PC-3 (cell line): ENCODE measurements at regions of chr22 and their contacts with region 1.

Region 1: DNA sequence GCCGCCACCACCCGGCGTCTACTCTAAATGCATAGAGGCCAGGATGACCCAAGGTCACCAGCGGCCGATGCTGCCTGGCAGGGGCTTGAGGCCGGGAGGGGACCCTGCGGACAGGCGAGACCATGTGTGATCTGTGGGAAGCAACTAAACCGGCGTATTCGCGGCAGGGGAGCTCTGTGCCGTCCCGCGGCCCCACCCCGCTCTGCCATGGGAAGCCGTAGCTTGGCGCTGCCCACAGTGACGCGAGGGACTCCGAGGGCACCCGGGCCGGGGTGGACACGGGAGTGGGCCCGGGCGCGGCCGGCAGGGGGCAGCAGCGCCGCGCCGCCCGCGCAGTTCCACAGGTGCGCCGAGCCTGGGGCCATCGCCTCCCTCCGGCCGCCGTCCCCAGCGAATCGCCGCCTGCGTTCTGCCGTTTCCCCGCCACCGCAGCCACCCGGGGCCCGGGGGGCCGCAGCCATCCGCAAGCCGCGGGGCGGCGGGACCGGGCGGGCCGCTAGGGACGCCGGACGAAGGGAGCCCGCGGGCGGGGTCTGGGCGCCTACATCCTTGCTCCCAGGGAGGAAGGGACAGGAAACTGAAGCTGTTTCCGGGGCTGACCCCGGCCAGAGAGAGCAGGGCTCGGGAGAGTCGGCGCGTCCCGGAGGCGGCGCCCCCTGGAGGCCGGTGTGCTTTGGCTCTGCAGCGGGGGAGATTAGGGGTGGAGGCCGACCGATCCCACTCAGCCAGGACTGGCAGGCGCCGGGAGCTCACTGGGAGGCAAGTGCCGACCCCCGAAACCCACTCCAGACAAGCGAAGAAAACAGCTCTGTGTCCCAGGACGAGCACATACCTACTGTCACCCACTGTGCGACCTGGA is 12.5 kb upstream of the HDHD5 start:
- DNase-seq: peak; percentile 83
- ATAC-seq: peak; percentile 96
- H3K4me3 ChIP-seq: peak overlapping the region; percentile 76
- H3K27ac ChIP-seq: peak overlapping the region; percentile 49
- H3K4me1 ChIP-seq: no peaks in the 10 kb centered on the region
- H3K27me3 ChIP-seq: no peaks in the 10 kb centered on the region
- CTCF ChIP-seq: peak; percentile 71

Region 2: DNA sequence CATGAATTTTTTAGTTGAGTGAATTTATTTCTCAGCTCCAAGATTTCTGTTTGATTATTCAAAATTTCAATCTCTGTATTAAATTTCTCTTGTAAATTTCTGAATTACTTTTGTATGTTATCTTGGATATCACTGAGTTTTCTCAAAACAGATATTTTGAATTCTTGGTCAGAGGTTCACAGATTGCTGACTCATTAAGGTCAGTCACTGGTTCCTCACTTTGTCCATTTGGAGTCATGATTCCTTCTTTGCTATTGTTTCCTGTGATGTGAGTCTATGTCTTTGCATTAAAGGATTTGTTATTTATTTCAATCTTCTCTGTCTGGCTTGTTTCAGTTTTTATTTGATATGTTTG is 96.9 kb before region 1 on chr22:
- CTCF ChIA-PET with region 1: interaction called, 11 read pairs
- POLR2A ChIA-PET with region 1: no interaction called
- intact Hi-C with region 1: loop called (anchors 1 kb)
- DNase-seq: no peak
- ATAC-seq: no peak
- H3K4me3 ChIP-seq: no peak overlapping the region
- H3K27ac ChIP-seq: no peak overlapping the region
- H3K4me1 ChIP-seq: no peaks in the 10 kb centered on the region; the same call in 1 of the 2 replicates
- H3K27me3 ChIP-seq: 0 out of 2 replicates have a peak, but pooled peaks cover 6% of the 10 kb centered on the region
- CTCF ChIP-seq: no peak

Region 3: DNA sequence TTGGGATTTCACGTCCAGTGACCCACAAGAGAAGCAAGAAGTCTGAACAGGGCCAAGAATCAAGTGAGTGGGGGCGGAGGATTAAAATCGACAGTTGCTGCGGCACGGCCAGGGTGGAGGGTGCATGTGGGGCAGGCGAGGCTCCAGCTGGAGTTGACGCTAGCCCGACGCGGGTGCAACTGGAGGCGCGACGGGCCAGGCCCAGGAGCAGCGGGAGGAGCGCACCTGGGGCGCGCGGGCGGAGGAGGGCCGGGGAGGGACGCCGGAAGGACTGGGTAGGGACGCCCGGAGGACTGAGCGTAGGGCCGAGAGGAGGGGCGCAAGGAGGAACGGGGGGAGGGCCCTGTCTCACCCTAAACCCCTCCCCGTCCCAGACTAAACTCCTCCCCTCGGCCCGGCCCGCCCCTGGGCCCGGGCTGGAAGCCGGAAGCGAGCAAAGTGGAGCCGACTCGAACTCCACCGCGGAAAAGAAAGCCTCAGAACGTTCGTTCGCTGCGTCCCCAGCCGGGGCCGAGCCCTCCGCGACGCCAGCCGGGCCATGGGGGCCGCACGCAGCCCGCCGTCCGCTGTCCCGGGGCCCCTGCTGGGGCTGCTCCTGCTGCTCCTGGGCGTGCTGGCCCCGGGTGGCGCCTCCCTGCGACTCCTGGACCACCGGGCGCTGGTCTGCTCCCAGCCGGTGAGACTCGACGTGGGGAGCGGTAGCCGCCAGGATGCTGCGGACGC is 86.8 kb before region 1 on chr22 and contains the start of gene IL17RA:
- CTCF ChIA-PET with region 1: interaction called, 3 read pairs
- POLR2A ChIA-PET with region 1: no interaction called
- intact Hi-C with region 1: loop called (anchors 2 kb)
- DNase-seq: peak; percentile 83
- ATAC-seq: peak; percentile 98
- H3K4me3 ChIP-seq: peak within 1 kb of the TSS; percentile 85
- H3K27ac ChIP-seq: no peak within 1 kb of the TSS
- H3K4me1 ChIP-seq: peaks cover 11% of the 10 kb centered on the region; the same call in 1 of the 2 replicates
- H3K27me3 ChIP-seq: no peaks in the 10 kb centered on the region
- CTCF ChIP-seq: no peak
- total RNA-seq, gene IL17RA: 5.9 and 8.9 TPM in 2 replicates

Region 4: GRCh38 chr22:17112486-17113042 is 59.0 kb before region 1 on chr22:
- CTCF ChIA-PET with region 1: interaction called, 6 read pairs
- POLR2A ChIA-PET with region 1: interaction called, 11 read pairs
- intact Hi-C with region 1: no loop called
- DNase-seq: peak; percentile 52
- ATAC-seq: peak; percentile 97
- H3K4me3 ChIP-seq: no peak overlapping the region
- H3K27ac ChIP-seq: no peak overlapping the region
- H3K4me1 ChIP-seq: peaks cover 11% of the 10 kb centered on the region
- H3K27me3 ChIP-seq: no peaks in the 10 kb centered on the region
- CTCF ChIP-seq: no peak

Region 5: DNA sequence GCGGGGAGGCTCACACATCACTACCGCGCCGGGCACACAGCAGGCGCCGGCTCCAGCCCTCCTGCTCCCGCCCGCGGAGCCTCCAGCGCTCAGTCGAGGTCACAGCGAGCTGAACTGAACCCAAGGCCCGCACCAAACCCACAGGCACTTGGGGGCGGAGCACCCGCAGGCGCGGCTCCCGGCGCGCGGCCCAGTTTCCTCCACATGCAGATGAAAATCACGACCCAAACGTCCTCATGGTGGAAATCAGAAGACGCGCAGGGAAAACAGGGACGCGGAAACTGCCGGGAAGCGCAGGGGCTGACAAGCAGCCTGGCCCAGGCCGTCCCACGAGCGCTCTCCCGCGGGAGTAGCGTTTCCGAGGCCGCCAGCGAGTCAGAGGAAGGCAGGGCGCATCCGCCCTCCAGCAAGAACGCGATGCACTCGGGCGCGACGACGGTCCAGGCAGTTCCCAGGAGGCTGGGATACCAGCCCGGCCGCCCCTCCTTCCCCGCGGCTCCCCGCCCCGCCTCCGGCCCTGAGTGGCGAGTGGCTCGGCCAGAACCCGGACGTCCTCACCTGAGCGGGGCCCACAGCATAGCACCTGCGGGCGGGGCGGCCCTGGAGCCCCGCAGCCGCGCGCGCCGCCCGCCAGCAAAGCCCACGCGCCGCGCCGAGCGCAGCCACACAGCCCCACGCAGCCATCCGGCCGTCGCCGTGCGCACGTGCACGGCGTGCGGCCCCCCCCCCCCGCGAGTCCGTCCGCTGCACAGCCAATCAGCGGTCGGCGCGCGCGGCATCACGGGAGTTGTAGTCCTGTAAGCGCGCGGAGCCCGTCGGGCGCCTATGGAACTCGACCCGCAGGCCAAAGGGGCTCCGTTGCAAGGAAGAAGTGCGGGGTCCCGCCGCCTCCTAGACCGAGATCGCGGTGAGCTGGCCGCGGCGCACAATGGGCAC is 12.7 kb before region 1 on chr22 and contains the start of gene HDHD5:
- CTCF ChIA-PET with region 1: interaction called, 12 read pairs
- POLR2A ChIA-PET with region 1: no interaction called
- intact Hi-C with region 1: no loop called
- DNase-seq: peak; percentile 75
- ATAC-seq: peak; percentile 84
- H3K4me3 ChIP-seq: peak within 1 kb of the TSS; percentile 83
- H3K27ac ChIP-seq: peak within 1 kb of the TSS; percentile 51
- H3K4me1 ChIP-seq: peaks cover 16% of the 10 kb centered on the region
- H3K27me3 ChIP-seq: no peaks in the 10 kb centered on the region
- CTCF ChIP-seq: no peak
- total RNA-seq, gene HDHD5: 57.3 and 62.9 TPM in 2 replicates

Region 6: GRCh38 chr22:17191163-17191784 is 19.7 kb after region 1 on chr22:
- CTCF ChIA-PET with region 1: interaction called, 11 read pairs
- POLR2A ChIA-PET with region 1: no interaction called
- intact Hi-C with region 1: no loop called
- DNase-seq: peak; percentile 27
- ATAC-seq: peak; percentile 62; the same call in 1 of the 2 replicates
- H3K4me3 ChIP-seq: no peak overlapping the region
- H3K27ac ChIP-seq: no peak overlapping the region
- H3K4me1 ChIP-seq: peaks cover 8% of the 10 kb centered on the region
- H3K27me3 ChIP-seq: no peaks in the 10 kb centered on the region
- CTCF ChIP-seq: no peak

Region 7: DNA sequence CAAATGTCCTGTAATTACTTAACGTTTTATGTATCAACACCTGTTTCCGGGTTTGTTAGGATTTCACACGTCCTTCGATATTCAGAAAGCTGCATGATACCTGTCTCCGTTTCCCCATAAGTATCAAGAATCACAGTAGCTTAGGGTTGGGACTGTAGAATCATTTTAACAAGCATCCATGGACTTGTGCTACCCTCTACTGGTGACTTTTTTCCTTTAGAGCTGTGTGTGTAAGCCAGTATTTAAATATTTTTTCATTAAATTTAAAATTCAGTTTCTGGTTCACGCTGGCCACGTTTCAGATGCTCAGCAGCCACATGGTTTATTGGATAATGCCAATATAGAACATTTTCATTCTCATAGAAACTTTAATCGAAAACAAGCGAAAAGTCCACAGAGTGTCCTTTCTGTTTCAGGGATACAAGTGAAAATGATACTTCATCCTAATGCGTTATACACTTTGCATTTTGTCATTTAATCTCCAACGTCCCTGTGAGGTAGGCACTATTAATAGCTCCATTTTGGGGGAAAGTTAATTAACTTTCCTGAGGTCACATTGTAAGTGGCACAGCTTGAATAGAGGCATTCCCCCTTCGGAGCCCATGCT is 330.2 kb after region 1 on chr22:
- CTCF ChIA-PET with region 1: interaction called, 34 read pairs
- POLR2A ChIA-PET with region 1: no interaction called
- intact Hi-C with region 1: loop called (anchors 1 kb)
- DNase-seq: peak; percentile 73
- ATAC-seq: peak; percentile 80
- H3K4me3 ChIP-seq: no peak overlapping the region
- H3K27ac ChIP-seq: no peak overlapping the region
- H3K4me1 ChIP-seq: no peaks in the 10 kb centered on the region
- H3K27me3 ChIP-seq: peaks cover 33% of the 10 kb centered on the region
- CTCF ChIP-seq: peak; percentile 69